CD4-positive, alpha-beta T cell (primary cell): ENCODE measurements at regions of chr2 and their contacts with region 1.

Region 1: DNA sequence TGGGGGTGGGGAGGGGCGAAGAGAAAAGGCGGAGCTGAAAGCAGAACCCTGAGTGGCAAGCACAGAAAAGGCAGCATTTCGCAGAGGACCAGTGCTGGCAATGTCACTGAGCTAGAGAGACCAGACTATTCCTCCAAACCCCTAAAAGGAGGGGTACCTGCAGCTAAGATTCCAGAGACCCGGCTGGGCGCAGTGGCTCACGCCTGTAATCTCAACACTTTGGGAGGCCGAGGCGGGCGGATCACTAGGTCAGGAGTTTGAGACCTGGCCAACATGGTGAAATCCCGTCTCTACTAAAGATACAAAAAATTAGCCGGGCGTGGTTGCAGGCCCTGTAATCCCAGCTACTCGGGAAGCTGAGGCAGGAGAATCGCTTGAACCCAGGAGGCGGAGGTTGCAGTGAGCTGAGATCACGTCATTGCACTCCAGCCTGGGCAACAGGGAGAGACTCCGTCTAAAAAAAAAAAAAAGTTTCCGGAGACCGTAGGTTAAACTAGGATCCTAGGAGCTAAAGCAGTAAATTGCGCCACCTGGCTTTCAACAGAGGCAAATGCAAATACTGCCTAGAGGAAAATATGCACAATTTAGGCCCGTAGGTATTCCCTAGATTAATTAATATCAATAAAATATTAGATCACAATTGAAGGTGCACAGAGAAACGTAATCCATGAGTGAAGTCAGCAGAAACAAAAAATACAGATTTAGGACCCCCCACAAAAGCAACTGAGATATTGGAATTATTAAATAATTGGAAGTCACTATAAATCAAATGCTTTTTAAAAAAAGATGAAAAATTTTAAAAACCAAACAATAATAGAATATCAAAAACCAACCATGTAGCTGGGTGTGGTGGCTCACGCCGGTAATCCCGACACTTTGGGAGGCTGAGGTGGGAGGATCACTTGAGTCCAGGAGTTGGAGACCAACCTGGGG is 4.9 kb downstream of the UCN start:
- DNase-seq: peak in 6 of 14 experiments; percentile 7 to 75 (median 65)
- ATAC-seq: peak; percentile 76
- H3K4me3 ChIP-seq: peak overlapping the region; percentile 39
- H3K4me3 Mint-ChIP-seq: peak overlapping the region; percentile 84
- H3K27ac ChIP-seq: no peak overlapping the region
- H3K27ac Mint-ChIP-seq: peak overlapping the region; percentile 45
- H3K4me1 ChIP-seq: peaks cover 20% of the 10 kb centered on the region
- H3K4me1 Mint-ChIP-seq: peaks cover 10% of the 10 kb centered on the region
- H3K27me3 ChIP-seq: peaks cover 23 to 26% of the 10 kb centered on the region in 2 experiments
- H3K27me3 Mint-ChIP-seq: peaks cover 44% of the 10 kb centered on the region
- CTCF ChIP-seq: peak; percentile 97

Region 2: DNA sequence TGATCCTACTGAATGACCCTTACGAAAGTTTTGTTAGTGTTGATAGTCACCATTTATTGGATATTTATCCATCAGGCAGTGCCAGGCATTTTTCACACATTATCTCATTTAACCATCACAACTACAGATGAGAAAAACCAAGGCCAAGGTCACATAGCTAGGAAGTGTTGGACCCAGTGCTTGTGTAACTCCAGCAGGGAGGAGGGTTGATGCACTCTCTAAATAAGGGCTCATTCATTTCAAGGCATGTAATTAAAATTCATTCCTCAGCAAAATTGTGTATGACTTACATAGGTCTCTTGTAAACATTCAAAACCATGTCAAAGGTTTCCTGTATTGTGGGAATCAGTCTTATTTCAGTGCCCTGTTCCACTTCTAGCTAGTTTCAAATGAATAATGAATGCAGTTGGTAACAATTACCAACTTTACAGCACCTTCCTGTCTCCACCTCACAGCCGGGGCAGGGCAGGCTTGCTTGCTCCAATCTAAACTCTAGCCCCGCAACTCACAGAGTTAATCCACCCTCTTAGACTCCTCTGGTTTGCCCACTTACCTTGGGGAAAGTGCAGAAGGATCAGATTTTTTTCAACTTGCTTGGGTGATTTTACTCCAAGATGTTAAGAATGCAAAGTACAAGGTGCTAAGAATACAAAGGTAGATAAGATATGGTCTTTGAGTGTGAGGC is 338.8 kb before region 1 on chr2:
- CTCF ChIA-PET with region 1: interaction called, 5 read pairs
- POLR2A ChIA-PET with region 1: interaction called, 5 read pairs
- intact Hi-C with region 1: loop called (anchors 5 kb)
- DNase-seq: no peak
- ATAC-seq: no peak
- H3K4me3 ChIP-seq: no peak overlapping the region
- H3K4me3 Mint-ChIP-seq: no peak overlapping the region
- H3K27ac ChIP-seq: no peak overlapping the region
- H3K27ac Mint-ChIP-seq: no peak overlapping the region
- H3K4me1 ChIP-seq: peaks cover 9% of the 10 kb centered on the region
- H3K4me1 Mint-ChIP-seq: peaks cover 10% of the 10 kb centered on the region
- H3K27me3 ChIP-seq: peaks cover 10 to 15% of the 10 kb centered on the region in 2 experiments
- H3K27me3 Mint-ChIP-seq: peaks cover 50% of the 10 kb centered on the region
- CTCF ChIP-seq: no peak

Region 3: DNA sequence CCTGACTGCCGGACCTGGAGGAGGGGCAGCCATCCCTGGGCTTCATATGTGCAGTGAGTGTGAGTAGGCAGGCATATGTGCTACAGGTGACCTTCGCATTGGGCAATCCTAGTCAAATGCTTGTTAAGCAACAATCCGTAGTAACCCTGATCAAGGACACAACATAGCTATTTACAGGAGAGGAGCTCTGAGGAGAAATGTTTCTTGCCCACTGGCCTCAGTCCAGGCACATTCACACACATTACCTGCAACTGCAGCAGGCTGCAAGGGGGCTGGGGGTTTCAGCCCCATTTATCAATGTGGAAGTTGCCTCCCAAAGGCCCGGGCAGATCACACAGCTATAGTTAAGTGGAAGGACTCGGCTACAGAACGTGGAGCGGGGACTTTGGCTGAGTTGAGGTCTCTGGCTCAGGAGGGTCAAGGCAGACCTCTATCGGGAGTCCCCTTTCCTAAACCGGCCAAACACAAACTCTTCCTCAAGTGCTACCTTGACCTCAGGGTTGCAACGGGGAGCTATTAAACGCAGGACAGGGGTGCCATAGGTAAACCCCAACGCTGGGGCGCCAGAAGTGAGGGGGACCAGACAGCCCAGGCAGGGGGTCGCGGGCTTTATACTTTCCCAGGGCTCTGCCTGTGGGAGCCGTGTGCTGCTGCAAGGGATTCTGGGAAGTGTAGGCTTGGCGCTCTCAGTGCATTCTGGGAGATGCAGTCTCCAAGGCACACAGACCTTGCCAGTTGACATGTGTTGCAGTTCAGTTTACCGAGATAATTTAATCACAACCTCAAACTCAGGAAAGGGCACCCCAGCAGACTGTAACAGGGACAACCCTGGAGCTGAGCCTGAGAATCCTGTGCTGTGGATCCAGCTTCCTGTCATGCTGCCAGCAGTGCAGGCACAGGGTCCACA is 207.4 kb before region 1 on chr2:
- CTCF ChIA-PET with region 1: interaction called, 4 read pairs
- POLR2A ChIA-PET with region 1: no interaction called
- intact Hi-C with region 1: loop called (anchors 1 to 2 kb)
- DNase-seq: peak in 8 of 14 experiments; percentile 19 to 73 (median 46)
- ATAC-seq: peak; percentile 88
- H3K4me3 ChIP-seq: peak overlapping the region; percentile 23
- H3K4me3 Mint-ChIP-seq: peak overlapping the region; percentile 4
- H3K27ac ChIP-seq: no peak overlapping the region
- H3K27ac Mint-ChIP-seq: no peak overlapping the region
- H3K4me1 ChIP-seq: peaks cover 9% of the 10 kb centered on the region
- H3K4me1 Mint-ChIP-seq: peaks cover 11% of the 10 kb centered on the region
- H3K27me3 ChIP-seq: no peaks in the 10 kb centered on the region
- H3K27me3 Mint-ChIP-seq: no peaks in the 10 kb centered on the region
- CTCF ChIP-seq: no peak

Region 4: GRCh38 chr2:27102329-27102728 is 201.0 kb before region 1 on chr2:
- CTCF ChIA-PET with region 1: interaction called, 4 read pairs
- POLR2A ChIA-PET with region 1: no interaction called
- intact Hi-C with region 1: loop called (anchors 1 to 2 kb)
- DNase-seq: no peak
- ATAC-seq: no peak
- H3K4me3 ChIP-seq: no peak overlapping the region
- H3K4me3 Mint-ChIP-seq: no peak overlapping the region
- H3K27ac ChIP-seq: no peak overlapping the region
- H3K27ac Mint-ChIP-seq: no peak overlapping the region
- H3K4me1 ChIP-seq: no peaks in the 10 kb centered on the region
- H3K4me1 Mint-ChIP-seq: no peaks in the 10 kb centered on the region
- H3K27me3 ChIP-seq: no peaks in the 10 kb centered on the region
- H3K27me3 Mint-ChIP-seq: peaks cover 10% of the 10 kb centered on the region
- CTCF ChIP-seq: no peak

Region 5: DNA sequence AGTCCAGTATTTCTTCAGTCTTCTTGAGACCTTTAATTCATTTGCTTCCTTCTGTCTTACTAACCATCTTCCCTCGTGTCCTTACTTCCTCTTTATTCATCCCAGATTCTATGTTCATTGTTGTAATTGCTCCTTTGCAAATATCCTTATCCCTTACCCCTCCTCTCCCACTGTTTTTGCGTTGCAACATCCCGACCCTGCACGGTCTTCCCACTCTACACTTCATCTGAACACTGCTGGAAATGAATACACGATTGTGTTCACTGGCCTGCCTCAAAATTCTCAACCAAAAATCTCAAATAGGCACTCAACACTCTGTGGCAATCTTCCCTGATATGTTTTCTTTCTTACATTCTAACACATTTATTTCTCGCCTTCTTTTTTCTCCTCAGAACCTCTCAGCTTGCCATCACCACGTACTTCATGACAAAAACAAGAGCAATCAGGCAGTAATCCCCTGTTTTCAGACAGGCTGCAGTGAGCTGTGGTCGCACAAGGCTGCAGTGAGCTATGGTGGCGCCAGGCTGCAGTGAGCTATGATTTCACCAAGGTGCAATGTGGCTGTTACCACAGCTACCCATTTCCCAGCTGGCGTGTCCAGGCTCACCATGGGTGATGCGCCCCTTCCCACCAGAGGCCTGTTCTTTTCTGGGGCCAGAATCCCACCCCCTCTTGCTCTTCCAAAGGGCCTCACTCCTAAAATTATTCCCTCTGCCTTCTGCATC is 128.9 kb before region 1 on chr2:
- CTCF ChIA-PET with region 1: interaction called, 6 read pairs
- POLR2A ChIA-PET with region 1: no interaction called
- intact Hi-C with region 1: loop called in 1 of 2 experiments (anchors 1 kb)
- DNase-seq: no peak
- ATAC-seq: no peak
- H3K4me3 ChIP-seq: no peak overlapping the region
- H3K4me3 Mint-ChIP-seq: no peak overlapping the region
- H3K27ac ChIP-seq: no peak overlapping the region
- H3K27ac Mint-ChIP-seq: no peak overlapping the region
- H3K4me1 ChIP-seq: peaks cover 8% of the 10 kb centered on the region
- H3K4me1 Mint-ChIP-seq: peaks cover 4% of the 10 kb centered on the region
- H3K27me3 ChIP-seq: peaks cover 3 to 7% of the 10 kb centered on the region in 2 experiments
- H3K27me3 Mint-ChIP-seq: peaks cover 44% of the 10 kb centered on the region
- CTCF ChIP-seq: no peak

Region 6: DNA sequence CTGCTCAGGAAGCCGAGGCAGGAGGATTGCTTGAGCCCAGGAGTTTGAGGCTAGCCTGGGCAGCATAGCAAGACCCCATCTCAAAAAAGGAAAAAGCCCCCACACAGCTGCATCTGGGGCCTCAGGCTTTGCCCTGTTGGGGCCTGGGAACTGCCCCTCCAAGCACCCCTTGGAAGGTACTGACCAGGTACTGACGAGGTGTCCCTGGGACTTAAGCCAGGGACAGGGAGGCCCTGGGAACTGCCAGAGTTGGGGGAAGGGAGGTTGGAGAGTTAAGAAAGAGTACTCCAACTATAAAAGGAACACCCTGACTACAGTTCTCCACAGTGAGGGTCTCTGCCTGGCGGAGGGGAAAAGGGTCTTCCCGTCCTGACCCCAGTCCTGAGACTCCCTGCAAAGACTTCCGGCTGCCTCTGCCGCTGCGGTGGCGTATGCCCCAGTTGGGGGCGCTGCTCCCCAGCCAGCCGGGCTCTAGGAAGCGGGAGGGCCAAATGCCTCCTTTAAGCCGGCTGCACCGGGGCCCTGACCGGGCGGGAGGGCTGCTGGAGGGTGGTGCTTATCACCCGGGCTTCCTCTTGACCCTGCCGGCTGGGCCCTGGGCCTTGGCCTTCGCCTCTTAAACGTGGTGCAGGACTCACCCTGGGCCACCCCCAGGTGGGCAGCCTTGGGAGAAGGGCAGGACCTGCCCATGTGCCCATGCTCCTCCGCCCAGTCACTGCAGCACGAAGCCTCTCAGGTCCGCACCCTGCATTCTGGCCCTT is 53.3 kb before region 1 on chr2:
- CTCF ChIA-PET with region 1: interaction called, 4 read pairs
- POLR2A ChIA-PET with region 1: no interaction called
- intact Hi-C with region 1: loop called in 1 of 2 experiments (anchors 1 kb)
- DNase-seq: peak; percentile 9 to 65 (median 40)
- ATAC-seq: peak; percentile 78
- H3K4me3 ChIP-seq: no peak overlapping the region
- H3K4me3 Mint-ChIP-seq: no peak overlapping the region
- H3K27ac ChIP-seq: no peak overlapping the region
- H3K27ac Mint-ChIP-seq: no peak overlapping the region
- H3K4me1 ChIP-seq: peaks cover 6% of the 10 kb centered on the region
- H3K4me1 Mint-ChIP-seq: no peaks in the 10 kb centered on the region
- H3K27me3 ChIP-seq: peaks cover 11 to 15% of the 10 kb centered on the region in 2 experiments
- H3K27me3 Mint-ChIP-seq: peaks cover 32% of the 10 kb centered on the region
- CTCF ChIP-seq: peak; percentile 46

Region 7: GRCh38 chr2:27322766-27323595 is 19.6 kb after region 1 on chr2 and contains the start of gene MPV17:
- CTCF ChIA-PET with region 1: interaction called, 6 read pairs
- POLR2A ChIA-PET with region 1: interaction called, 12 read pairs
- intact Hi-C with region 1: no loop called
- DNase-seq: peak; percentile 77 to 93 (median 82)
- ATAC-seq: peak; percentile 97
- H3K4me3 ChIP-seq: peak within 1 kb of the TSS; percentile 86
- H3K4me3 Mint-ChIP-seq: peak within 1 kb of the TSS; percentile 100
- H3K27ac ChIP-seq: peak within 1 kb of the TSS; percentile 90 to 93
- H3K27ac Mint-ChIP-seq: peak within 1 kb of the TSS; percentile 98
- H3K4me1 ChIP-seq: peaks cover 25% of the 10 kb centered on the region
- H3K4me1 Mint-ChIP-seq: peaks cover 31% of the 10 kb centered on the region
- H3K27me3 ChIP-seq: no peaks in the 10 kb centered on the region
- H3K27me3 Mint-ChIP-seq: no peaks in the 10 kb centered on the region
- CTCF ChIP-seq: no peak
- total RNA-seq, gene MPV17: 29.3 to 31.0 TPM